Aorta (tissue), 5 donors: ENCODE measurements at regions of chr5 and their contacts with region 1.

Region 1: GRCh38 chr5:96114736-96115135 is 153.1 kb upstream of the ELL2 start:
- DNase-seq: no peak
- ATAC-seq: no peak
- H3K4me3 ChIP-seq: no peak overlapping the region
- H3K27ac ChIP-seq: peak overlapping the region in 1 of 2 donors; percentile 28
- H3K4me1 ChIP-seq: peaks cover 0 to 9% of the 10 kb centered on the region in 2 donors
- H3K27me3 ChIP-seq: no peaks in the 10 kb centered on the region

Region 2: GRCh38 chr5:96151891-96152290 is 37.2 kb after region 1 on chr5:
- intact Hi-C with region 1: no loop called
- DNase-seq: no peak
- ATAC-seq: no peak
- H3K4me3 ChIP-seq: no peak overlapping the region
- H3K27ac ChIP-seq: no peak overlapping the region
- H3K4me1 ChIP-seq: peaks cover 0 to under 1% of the 10 kb centered on the region in 2 donors
- H3K27me3 ChIP-seq: no peaks in the 10 kb centered on the region

Region 3: GRCh38 chr5:96200641-96201040 is 85.9 kb after region 1 on chr5:
- intact Hi-C with region 1: loop called in 1 of 2 experiments (anchors 5 kb)
- DNase-seq: no peak
- ATAC-seq: no peak
- H3K4me3 ChIP-seq: no peak overlapping the region
- H3K27ac ChIP-seq: no peak overlapping the region
- H3K4me1 ChIP-seq: no peaks in the 10 kb centered on the region
- H3K27me3 ChIP-seq: no peaks in the 10 kb centered on the region